ENCODE measurements at regions of chr10 and their contacts with region 1.

Region 1: GRCh38 chr10:13787015-13787421 is 200.3 kb downstream of the PRPF18 start:
- DNase-seq: peak; percentile 50
- ATAC-seq: peak; percentile 80
- H3K4me3 Mint-ChIP-seq: peak overlapping the region; percentile 80
- H3K27ac Mint-ChIP-seq: peak overlapping the region; percentile 97
- H3K4me1 Mint-ChIP-seq: peaks cover 57% of the 10 kb centered on the region
- H3K27me3 Mint-ChIP-seq: no peaks in the 10 kb centered on the region
- CTCF ChIP-seq: no peak

Region 2: DNA sequence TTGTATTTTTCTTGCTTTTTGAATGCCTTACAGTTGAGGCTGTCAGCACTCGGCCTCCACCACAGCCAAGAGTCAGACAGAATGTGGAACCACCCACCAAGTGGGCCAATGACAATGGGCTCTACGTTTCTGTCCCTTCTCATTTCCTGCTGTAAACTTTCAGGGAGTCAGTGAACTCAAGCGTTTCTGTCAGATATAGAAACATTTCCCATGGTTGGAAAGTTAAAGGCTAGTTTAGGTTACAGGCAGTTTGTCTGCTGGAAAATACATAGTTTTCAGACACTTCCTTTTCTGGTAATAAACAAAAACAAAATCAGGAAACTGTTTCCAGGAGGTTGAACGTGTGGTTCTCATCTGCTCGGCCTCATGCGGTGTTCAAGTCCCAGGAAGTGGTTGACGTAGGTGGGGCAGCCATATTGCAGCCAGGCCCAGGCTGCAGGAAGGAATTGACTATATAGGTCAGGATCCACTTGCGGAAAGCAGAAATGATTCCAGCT is 1192.5 kb before region 1 on chr10:
- CTCF ChIA-PET with region 1: no interaction called
- POLR2A ChIA-PET with region 1: no interaction called
- intact Hi-C with region 1: no loop called
- DNase-seq: no peak
- ATAC-seq: peak; percentile 45
- H3K4me3 Mint-ChIP-seq: peak overlapping the region; percentile 19
- H3K27ac Mint-ChIP-seq: peak overlapping the region; percentile 79
- H3K4me1 Mint-ChIP-seq: peaks cover 52% of the 10 kb centered on the region
- H3K27me3 Mint-ChIP-seq: no peaks in the 10 kb centered on the region
- CTCF ChIP-seq: no peak

Region 3: DNA sequence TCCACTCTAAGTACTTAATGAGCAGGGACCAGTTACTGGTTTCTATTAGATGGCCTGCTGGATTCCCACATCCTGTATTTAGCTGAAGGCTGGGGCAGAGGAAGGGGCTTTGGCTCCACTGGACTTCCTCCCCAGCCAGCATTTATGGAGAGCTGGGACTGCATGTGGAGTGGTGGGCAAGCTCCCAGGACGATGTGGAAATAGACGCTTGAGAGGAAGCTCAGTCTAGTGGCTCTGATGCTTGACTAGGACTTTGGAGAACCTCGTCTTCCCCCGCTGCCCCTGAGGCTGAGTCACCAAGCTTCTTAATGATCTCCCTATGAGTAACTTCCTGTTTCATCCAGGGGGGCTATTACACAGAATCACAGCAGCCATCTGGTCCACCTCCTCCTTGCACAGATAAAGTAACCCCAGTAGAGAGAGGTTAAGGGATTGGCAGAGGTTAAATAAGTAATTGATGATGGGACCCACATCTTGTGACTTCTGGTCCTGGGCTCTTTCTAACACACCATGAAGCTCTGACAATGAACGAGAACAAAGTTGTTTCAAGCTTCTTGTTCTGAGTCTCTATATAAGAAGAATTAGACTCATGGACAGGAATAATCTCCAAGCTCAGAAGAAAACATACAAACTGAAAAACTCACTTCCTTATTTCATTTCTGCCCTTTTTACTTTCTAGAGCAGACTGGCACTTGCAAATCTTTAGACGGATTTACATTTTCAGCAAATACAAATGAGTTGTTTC is 74.0 kb before region 1 on chr10:
- CTCF ChIA-PET with region 1: interaction called, 3 read pairs
- POLR2A ChIA-PET with region 1: interaction called, 5 read pairs
- intact Hi-C with region 1: loop called (anchors 2 kb)
- DNase-seq: peak; percentile 47
- ATAC-seq: peak; percentile 90
- H3K4me3 Mint-ChIP-seq: peak overlapping the region; percentile 72
- H3K27ac Mint-ChIP-seq: peak overlapping the region; percentile 97
- H3K4me1 Mint-ChIP-seq: peaks cover 28% of the 10 kb centered on the region
- H3K27me3 Mint-ChIP-seq: no peaks in the 10 kb centered on the region
- CTCF ChIP-seq: no peak

Region 4: GRCh38 chr10:13743101-13743693 is 43.8 kb before region 1 on chr10:
- CTCF ChIA-PET with region 1: no interaction called
- POLR2A ChIA-PET with region 1: no interaction called
- intact Hi-C with region 1: no loop called
- DNase-seq: no peak
- ATAC-seq: no peak
- H3K4me3 Mint-ChIP-seq: no peak overlapping the region
- H3K27ac Mint-ChIP-seq: no peak overlapping the region
- H3K4me1 Mint-ChIP-seq: peaks cover 2% of the 10 kb centered on the region
- H3K27me3 Mint-ChIP-seq: peaks cover 17% of the 10 kb centered on the region
- CTCF ChIP-seq: no peak

Region 5: GRCh38 chr10:13877154-13877909 is 90.3 kb after region 1 on chr10:
- CTCF ChIA-PET with region 1: no interaction called
- POLR2A ChIA-PET with region 1: interaction called, 7 read pairs
- intact Hi-C with region 1: loop called (anchors 5 kb)
- DNase-seq: no peak
- ATAC-seq: no peak
- H3K4me3 Mint-ChIP-seq: no peak overlapping the region
- H3K27ac Mint-ChIP-seq: no peak overlapping the region
- H3K4me1 Mint-ChIP-seq: peaks cover 31% of the 10 kb centered on the region
- H3K27me3 Mint-ChIP-seq: no peaks in the 10 kb centered on the region
- CTCF ChIP-seq: no peak

Region 6: DNA sequence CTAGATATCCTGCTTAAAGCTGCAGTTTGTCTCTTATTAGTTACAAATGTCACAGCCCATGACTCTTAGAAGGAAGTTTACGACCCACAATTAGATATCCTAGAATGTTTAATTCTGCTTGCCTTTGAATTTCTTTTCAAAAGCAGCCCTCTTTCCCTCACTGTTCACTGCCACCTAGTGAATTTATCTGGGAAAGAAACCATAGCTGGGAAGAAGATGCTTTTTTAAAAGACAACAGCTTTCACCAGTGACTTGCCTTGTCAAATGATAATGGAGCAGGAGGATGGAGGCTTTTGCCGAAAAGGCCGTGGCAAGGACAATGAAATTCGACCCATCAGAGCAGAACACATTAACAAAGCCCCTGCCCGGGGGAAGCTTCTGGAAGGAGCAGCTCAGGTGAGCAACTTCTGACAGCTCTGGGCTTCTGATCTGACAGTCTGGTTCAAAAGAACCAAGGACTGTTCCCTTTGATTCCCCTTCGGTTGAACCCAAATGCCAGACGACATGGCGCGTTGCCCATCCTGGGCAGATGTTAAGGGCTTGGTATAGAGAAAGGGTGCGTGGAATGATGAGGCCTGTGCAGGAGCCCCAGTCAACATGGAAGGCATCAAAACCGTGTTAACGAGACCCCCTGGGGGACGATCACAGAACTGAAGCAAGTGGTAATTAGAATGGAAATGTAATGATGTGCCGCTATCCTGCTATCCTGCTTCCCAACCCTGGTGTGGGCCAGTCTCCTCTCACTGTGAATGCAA is 306.9 kb after region 1 on chr10:
- CTCF ChIA-PET with region 1: no interaction called
- POLR2A ChIA-PET with region 1: no interaction called
- intact Hi-C with region 1: loop called (anchors 5 kb)
- DNase-seq: no peak
- ATAC-seq: no peak
- H3K4me3 Mint-ChIP-seq: no peak overlapping the region
- H3K27ac Mint-ChIP-seq: no peak overlapping the region
- H3K4me1 Mint-ChIP-seq: no peaks in the 10 kb centered on the region
- H3K27me3 Mint-ChIP-seq: peaks cover 4% of the 10 kb centered on the region
- CTCF ChIP-seq: no peak

Region 7: GRCh38 chr10:14604181-14605142 is 817.4 kb after region 1 on chr10:
- CTCF ChIA-PET with region 1: no interaction called
- POLR2A ChIA-PET with region 1: no interaction called
- intact Hi-C with region 1: loop called (anchors 5 kb)
- DNase-seq: peak; percentile 72
- ATAC-seq: peak; percentile 55
- H3K4me3 Mint-ChIP-seq: peak overlapping the region; percentile 86
- H3K27ac Mint-ChIP-seq: peak overlapping the region; percentile 94
- H3K4me1 Mint-ChIP-seq: peaks cover 68% of the 10 kb centered on the region
- H3K27me3 Mint-ChIP-seq: no peaks in the 10 kb centered on the region
- CTCF ChIP-seq: no peak

Region 8: DNA sequence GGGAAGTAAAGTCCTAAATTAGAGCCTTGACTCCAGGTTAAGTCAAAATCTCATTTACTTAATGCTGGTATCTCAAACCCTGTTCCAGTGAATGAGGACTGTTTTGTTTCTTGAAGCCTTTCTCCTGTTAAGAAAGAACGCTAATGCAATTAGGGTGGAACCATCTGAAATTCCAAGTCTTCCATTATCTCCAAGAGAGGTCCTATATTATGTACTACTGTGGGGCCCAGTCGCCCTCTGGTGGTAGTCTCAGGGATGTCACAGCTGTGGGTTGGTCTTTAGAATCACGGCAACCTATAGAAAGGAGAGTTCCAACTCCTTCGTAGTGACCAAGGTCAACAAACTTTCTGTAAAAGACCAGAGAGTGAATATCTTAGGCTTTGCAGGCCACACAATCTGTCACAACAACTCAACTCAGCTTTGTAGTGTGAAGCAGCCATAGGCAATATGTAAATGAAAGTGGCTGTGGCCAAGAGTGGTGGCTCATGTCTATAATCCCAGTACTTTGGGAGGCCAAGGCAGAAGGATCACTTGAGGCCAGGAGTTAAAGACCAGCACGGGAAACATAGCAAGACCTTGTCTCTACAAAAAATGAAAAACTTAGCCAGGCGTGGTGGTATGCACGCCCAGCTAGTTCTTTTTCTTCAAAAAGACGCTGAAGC is 1319.5 kb after region 1 on chr10:
- CTCF ChIA-PET with region 1: no interaction called
- POLR2A ChIA-PET with region 1: no interaction called
- intact Hi-C with region 1: loop called (anchors 10 kb)
- DNase-seq: peak; percentile 32
- ATAC-seq: peak; percentile 96
- H3K4me3 Mint-ChIP-seq: no peak overlapping the region
- H3K27ac Mint-ChIP-seq: no peak overlapping the region
- H3K4me1 Mint-ChIP-seq: peaks cover 8% of the 10 kb centered on the region
- H3K27me3 Mint-ChIP-seq: no peaks in the 10 kb centered on the region
- CTCF ChIP-seq: peak; percentile 51

Measured in activated B cell treated with CpG ODN at 0.5 μM for 24 hours (primary cell).